ENCODE measurements at regions of chr21 and their contacts with region 1.

Region 1: GRCh38 chr21:29287383-29287782 is 11.3 kb upstream of the BACH1 start:
- DNase-seq: no peak
- H3K4me3 ChIP-seq: no peak overlapping the region
- H3K27ac ChIP-seq: no peak overlapping the region
- H3K4me1 ChIP-seq: peaks cover 0 to 11% (median 0%) of the 10 kb centered on the region in 4 donors
- H3K27me3 ChIP-seq: no peaks in the 10 kb centered on the region
- CTCF ChIP-seq: no peak
- EP300 ChIP-seq: no peak
- POLR2A ChIP-seq: no peak

Region 2: DNA sequence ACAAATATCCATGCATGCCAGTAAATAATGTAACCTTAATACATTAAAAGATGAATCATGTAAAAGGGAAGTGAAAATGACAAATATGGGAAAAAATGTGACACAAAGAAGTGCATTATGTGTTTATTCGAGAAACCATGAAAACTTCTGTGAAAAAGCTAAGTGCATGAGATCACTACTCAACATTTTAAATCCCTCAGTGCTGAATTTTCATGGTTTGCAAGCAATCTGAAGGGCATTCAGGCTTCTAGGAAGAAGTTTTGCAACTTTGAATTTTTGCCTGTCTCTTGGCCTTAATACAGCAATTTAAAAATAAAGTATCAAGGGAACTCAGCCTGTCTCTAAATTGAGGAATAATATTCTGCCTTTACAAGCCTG is 78.7 kb before region 1 on chr21:
- in situ Hi-C with region 1: no loop called
- intact Hi-C with region 1: loop called (anchors 2 kb)
- DNase-seq: no peak
- H3K4me3 ChIP-seq: no peak overlapping the region
- H3K27ac ChIP-seq: peak overlapping the region; percentile 31 to 55 (median 38)
- H3K4me1 ChIP-seq: peaks cover 0 to 4% (median 0%) of the 10 kb centered on the region in 4 donors
- H3K27me3 ChIP-seq: no peaks in the 10 kb centered on the region
- CTCF ChIP-seq: no peak
- EP300 ChIP-seq: no peak
- POLR2A ChIP-seq: no peak

Region 3: GRCh38 chr21:29221253-29221744 is 66.1 kb before region 1 on chr21:
- in situ Hi-C with region 1: loop called in 1 of 4 experiments (anchors 5 kb)
- intact Hi-C with region 1: no loop called
- DNase-seq: no peak
- H3K4me3 ChIP-seq: no peak overlapping the region
- H3K27ac ChIP-seq: no peak overlapping the region
- H3K4me1 ChIP-seq: peaks cover 1 to 32% (median 14%) of the 10 kb centered on the region in 4 donors
- H3K27me3 ChIP-seq: no peaks in the 10 kb centered on the region
- CTCF ChIP-seq: no peak
- EP300 ChIP-seq: no peak
- POLR2A ChIP-seq: no peak

Region 4: GRCh38 chr21:29656504-29657239 is 369.3 kb after region 1 on chr21:
- in situ Hi-C with region 1: no loop called
- intact Hi-C with region 1: no loop called
- DNase-seq: no peak
- H3K4me3 ChIP-seq: no peak overlapping the region
- H3K27ac ChIP-seq: no peak overlapping the region
- H3K4me1 ChIP-seq: no peaks in the 10 kb centered on the region
- H3K27me3 ChIP-seq: no peaks in the 10 kb centered on the region
- CTCF ChIP-seq: no peak
- EP300 ChIP-seq: no peak
- POLR2A ChIP-seq: no peak

Measured in transverse colon (tissue), 4 donors.